ENCODE measurements at regions of chr17 and their contacts with region 1.

Region 1: GRCh38 chr17:19447085-19447583 is 36.1 kb downstream of the RNF112 start:
- DNase-seq: peak; percentile 20
- ATAC-seq: peak; percentile 61
- H3K4me3 ChIP-seq: no peak overlapping the region
- H3K27ac ChIP-seq: no peak overlapping the region
- H3K4me1 ChIP-seq: no peaks in the 10 kb centered on the region
- H3K27me3 ChIP-seq: peaks cover 0 to 2% of the 10 kb centered on the region in 2 experiments; a peak in 2 of 4 replicates
- CTCF ChIP-seq: peak; percentile 82 to 86 (median 85)
- EP300 ChIP-seq: no peak
- POLR2A ChIP-seq: no peak
- RAD21 ChIP-seq: peak; percentile 76

Region 2: DNA sequence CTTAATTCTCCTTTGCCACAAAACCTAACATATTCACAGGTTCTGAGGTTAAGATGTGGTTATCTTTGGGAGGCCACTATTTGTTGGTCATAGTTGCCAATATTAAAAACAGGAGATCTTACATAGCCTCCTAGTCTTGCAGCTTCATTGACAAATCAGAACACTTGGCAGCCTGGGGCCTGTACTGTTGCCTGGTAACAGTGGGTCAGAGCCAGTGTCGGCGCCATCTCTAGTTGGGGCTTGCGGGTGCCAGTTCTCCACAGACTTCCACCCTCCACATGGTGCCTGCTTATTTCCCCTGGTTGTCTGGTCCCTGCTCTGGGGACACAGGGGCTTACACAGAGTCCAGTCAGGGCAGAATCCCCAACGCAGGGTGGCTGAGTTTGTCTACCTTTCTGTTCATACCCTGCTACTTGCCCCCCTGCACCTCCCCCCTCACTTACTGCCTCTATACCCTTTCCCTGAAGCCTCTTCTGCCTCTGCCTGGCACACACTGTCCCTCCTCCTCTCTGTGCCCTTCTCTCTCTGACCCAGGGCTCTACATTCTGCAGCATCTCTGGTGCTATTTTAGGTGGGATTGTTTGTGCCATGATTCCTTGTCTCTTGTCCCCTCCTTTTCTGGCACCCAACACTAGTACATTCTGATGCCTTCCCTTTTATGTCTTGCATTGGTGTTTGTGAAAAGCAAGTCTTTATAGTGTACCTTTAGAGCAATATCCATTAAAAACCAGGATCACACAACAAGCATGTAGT is 196.5 kb before region 1 on chr17:
- CTCF ChIA-PET with region 1: no interaction called
- POLR2A ChIA-PET with region 1: no interaction called
- RAD21 ChIA-PET with region 1: no interaction called
- SMC1A ChIA-PET with region 1: no interaction called
- in situ Hi-C with region 1: loop called (anchors 5 kb)
- intact Hi-C with region 1: no loop called
- DNase-seq: no peak
- ATAC-seq: no peak
- H3K4me3 ChIP-seq: no peak overlapping the region
- H3K27ac ChIP-seq: no peak overlapping the region
- H3K4me1 ChIP-seq: no peaks in the 10 kb centered on the region
- H3K27me3 ChIP-seq: no peaks in the 10 kb centered on the region; a peak in 2 of 4 replicates
- CTCF ChIP-seq: no peak
- EP300 ChIP-seq: no peak
- POLR2A ChIP-seq: no peak
- RAD21 ChIP-seq: no peak

Region 3: DNA sequence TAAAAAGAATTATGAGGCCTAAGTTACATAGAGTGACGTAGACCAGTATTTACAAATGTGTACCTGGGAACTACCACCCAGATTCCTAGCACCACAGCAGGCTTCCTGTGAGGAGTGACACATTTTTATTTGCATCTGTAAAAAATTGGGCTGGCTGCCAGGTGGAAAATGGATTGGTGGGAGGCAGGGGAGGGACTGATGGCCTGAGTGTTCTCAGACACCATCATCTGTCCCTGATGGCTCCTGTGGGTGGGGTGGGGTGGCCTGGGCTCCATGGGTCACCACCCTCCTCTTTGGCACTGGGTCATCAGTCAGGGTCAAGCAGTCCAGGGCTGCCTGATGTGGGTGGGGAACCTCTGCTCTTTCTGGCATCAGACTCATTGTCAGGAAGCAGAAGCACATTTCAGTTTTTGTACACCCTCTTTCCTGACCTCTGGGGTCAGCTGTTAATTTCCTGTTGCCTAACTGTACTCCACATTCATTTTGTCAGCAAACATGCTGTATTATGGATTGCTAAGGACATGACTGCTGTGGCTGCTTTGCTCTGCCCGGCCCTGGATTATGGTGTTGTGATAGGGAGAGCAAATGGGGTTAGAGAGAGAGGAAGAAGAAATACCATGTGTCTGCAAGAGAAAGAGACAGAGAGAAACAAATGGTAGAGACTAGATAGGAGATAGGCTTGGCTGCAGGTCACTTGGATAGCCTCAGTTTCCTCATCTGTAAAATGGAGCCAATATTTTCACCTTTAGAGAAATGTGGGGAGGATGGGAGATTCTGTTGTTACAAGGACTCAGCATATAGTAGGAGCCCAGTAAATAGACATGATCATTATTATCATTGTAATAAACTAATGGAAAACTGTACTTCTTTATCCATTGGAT is 48.6 kb before region 1 on chr17:
- CTCF ChIA-PET with region 1: interaction called, 10 read pairs
- POLR2A ChIA-PET with region 1: no interaction called
- RAD21 ChIA-PET with region 1: interaction called, 12 read pairs
- SMC1A ChIA-PET with region 1: interaction called, 9 read pairs
- in situ Hi-C with region 1: no loop called
- intact Hi-C with region 1: loop called (anchors 2 kb)
- DNase-seq: no peak
- ATAC-seq: no peak
- H3K4me3 ChIP-seq: no peak overlapping the region
- H3K27ac ChIP-seq: no peak overlapping the region
- H3K4me1 ChIP-seq: peaks cover 4% of the 10 kb centered on the region; the same call in 1 of the 2 replicates
- H3K27me3 ChIP-seq: no peaks in the 10 kb centered on the region; a peak in 1 of 4 replicates
- CTCF ChIP-seq: no peak
- EP300 ChIP-seq: no peak
- POLR2A ChIP-seq: no peak
- RAD21 ChIP-seq: no peak

Measured in GM12878 (cell line).